Motor neuron (in vitro differentiated cells): ENCODE measurements at regions of chr2 and their contacts with region 1.

Region 1: GRCh38 chr2:15636972-15637785 is 45.5 kb downstream of the DDX1 start:
- ATAC-seq: peak; percentile 65 to 98 (median 96)
- H3K4me3 ChIP-seq: no peak overlapping the region
- H3K27ac ChIP-seq: no peak overlapping the region
- H3K4me1 ChIP-seq: peaks cover 4% of the 10 kb centered on the region in 2 donors

Region 2: DNA sequence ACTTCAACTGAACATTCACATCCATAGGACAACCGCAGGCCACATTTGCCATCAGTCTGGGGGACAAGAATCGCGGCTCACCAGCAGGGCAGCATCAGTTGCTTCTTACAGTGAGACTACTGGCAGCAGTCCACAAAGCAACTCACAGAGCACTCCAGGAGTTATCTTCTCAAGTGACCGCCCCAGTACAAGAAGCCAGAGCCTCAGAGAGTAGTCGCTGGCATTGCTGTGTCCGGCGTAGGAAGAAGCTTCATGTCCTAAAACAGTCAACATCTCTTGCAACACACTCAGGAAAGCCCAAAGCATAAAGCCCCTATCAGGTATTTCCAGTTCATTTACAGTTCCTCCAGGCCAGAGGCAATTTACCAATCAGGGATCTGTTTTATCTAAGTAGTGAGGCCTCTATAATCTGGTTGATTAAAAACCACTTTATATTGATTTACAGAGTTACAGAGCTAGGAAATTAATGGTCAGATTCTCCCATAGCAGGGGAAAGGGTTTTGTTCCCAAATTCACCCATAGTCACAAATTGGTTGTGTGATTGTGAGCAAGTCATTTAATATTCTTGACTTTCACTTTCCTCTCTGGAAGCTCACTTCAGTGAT is 253.3 kb before region 1 on chr2:
- in situ Hi-C with region 1: no loop called
- ATAC-seq: no peak
- H3K4me3 ChIP-seq: no peak overlapping the region
- H3K27ac ChIP-seq: no peak overlapping the region
- H3K4me1 ChIP-seq: no peaks in the 10 kb centered on the region

Region 3: GRCh38 chr2:15939854-15940660 is 302.9 kb after region 1 on chr2 and contains the start of gene MYCN:
- in situ Hi-C with region 1: loop called in 4 of 9 experiments (anchors 10 to 25 kb)
- ATAC-seq: peak; percentile 13 to 71 (median 65)
- H3K4me3 ChIP-seq: peak within 1 kb of the TSS; percentile 62 to 84 (median 73)
- H3K27ac ChIP-seq: peak within 1 kb of the TSS; percentile 69
- H3K4me1 ChIP-seq: peaks cover 7 to 12% of the 10 kb centered on the region in 2 donors
- total RNA-seq, gene MYCN: 0.31 to 55.9 (median 17.9) TPM in 6 of 8 experiments, not detected in the others

Region 4: DNA sequence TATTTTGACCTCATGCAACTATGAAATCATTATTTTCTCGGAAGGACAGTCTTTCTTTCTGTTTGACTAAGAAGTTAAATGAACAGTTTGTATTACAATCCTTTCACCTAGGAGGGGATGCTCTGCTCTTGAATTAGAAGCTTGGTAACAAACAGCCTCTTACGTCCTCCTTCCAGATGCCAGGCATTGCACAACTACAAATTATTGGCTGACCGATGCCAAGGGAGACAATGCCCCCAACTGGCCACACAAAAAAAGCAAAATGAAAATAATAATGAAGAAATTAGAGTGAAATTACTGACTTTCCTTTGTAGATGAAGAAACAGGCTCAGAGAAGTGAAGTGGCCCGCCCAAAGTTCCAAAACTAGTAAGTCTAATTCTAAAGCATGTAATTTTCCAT is 850.5 kb after region 1 on chr2:
- in situ Hi-C with region 1: loop called in 2 of 9 experiments (anchors 10 to 25 kb)
- ATAC-seq: peak in 2 of 8 experiments; percentile 34 to 57
- H3K4me3 ChIP-seq: no peak overlapping the region
- H3K27ac ChIP-seq: no peak overlapping the region
- H3K4me1 ChIP-seq: peaks cover 0 to under 1% of the 10 kb centered on the region in 2 donors

Region 5: GRCh38 chr2:16507655-16508489 is 870.7 kb after region 1 on chr2:
- in situ Hi-C with region 1: loop called in 3 of 9 experiments (anchors 25 kb)
- ATAC-seq: peak; percentile 61 to 98 (median 94)
- H3K4me3 ChIP-seq: peak overlapping the region; percentile 24 to 49 (median 37)
- H3K27ac ChIP-seq: no peak overlapping the region
- H3K4me1 ChIP-seq: peaks cover 18 to 26% of the 10 kb centered on the region in 2 donors

Region 6: GRCh38 chr2:16625201-16625729 is 988.1 kb after region 1 on chr2:
- in situ Hi-C with region 1: loop called in 3 of 9 experiments (anchors 10 to 25 kb)
- ATAC-seq: peak in 2 of 8 experiments; percentile 11 to 32
- H3K4me3 ChIP-seq: no peak overlapping the region
- H3K27ac ChIP-seq: no peak overlapping the region
- H3K4me1 ChIP-seq: peaks cover 18 to 31% of the 10 kb centered on the region in 2 donors